Mucosa of descending colon (tissue), 3 donors: ENCODE measurements at regions of chr1 and their contacts with region 1.

Region 1: GRCh38 chr1:17236779-17237560 is 11.9 kb upstream of the PADI3 start:
- DNase-seq: peak; percentile 86 to 97 (median 94)
- ATAC-seq: peak; percentile 62
- H3K4me3 ChIP-seq: no peak overlapping the region
- H3K4me1 ChIP-seq: peaks cover 21% of the 10 kb centered on the region
- CTCF ChIP-seq: peak; percentile 66

Region 2: DNA sequence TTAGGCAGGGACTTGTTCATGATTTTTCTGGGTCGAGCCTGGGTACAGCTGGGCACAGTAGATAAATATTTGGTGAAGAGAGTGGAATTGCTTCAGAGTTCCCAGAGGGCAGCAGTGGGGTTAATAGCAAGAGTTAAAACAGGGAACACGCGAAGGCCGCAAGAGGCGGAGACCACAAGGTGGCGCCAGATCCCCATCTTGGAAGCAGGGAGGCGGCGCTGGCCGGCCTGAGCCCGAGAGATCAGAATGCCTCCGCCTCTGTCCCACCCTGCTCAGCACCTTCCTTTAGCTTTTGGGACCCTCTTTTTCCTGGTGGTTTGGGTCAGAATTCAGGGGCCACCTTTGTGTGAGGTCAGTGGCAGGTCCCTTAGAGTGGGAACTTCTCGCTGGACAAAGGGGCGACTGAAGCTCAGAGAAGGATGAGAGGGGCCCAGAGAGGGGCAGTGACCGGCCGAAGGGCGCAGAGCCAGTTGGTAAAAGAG is 111.2 kb before region 1 on chr1:
- intact Hi-C with region 1: loop called (anchors 2 kb)
- DNase-seq: peak; percentile 89 to 97 (median 93)
- ATAC-seq: peak; percentile 92
- H3K4me3 ChIP-seq: no peak overlapping the region
- H3K4me1 ChIP-seq: peaks cover 18% of the 10 kb centered on the region
- CTCF ChIP-seq: peak; percentile 90